ENCODE measurements at regions of chr3 and their contacts with region 1.

Region 1: DNA sequence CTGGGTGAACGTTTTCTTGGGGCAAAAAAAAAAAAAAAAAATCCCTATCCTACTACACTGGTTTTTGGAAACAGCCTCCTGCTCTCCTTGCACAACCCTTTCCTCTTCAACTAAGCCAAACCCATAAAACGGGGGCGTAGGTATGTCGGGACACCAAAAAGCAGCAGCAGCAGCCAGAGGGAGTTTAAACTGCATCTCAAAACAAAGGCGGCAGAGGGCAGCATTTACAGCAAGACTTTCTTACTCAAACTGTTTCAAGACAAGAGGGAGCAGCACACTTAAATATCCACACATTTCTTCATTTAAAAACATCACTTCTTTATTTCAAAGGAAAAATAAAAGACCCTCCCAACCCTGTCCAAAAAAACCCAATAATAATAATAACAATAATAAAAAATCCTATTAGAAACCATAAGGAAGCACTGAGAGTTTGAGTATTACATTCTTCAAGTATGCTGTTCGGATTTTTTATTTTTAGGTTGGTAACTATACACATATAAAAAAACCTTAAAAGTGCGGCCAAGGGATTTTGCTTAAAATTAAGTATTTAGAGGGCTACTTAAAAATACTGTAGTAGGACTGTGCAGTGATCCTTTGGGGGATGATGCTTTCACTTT is 43.9 kb upstream of the PLXND1 start:
- DNase-seq: peak; percentile 88
- H3K4me3 Mint-ChIP-seq: no peak overlapping the region
- H3K27ac Mint-ChIP-seq: no peak overlapping the region
- H3K4me1 Mint-ChIP-seq: peaks cover 21% of the 10 kb centered on the region
- H3K27me3 Mint-ChIP-seq: no peaks in the 10 kb centered on the region
- CTCF ChIP-seq: peak; percentile 75

Region 2: GRCh38 chr3:129809297-129809696 is 158.9 kb after region 1 on chr3:
- CTCF ChIA-PET with region 1: interaction called, 10 read pairs
- POLR2A ChIA-PET with region 1: no interaction called
- intact Hi-C with region 1: no loop called
- DNase-seq: no peak
- H3K4me3 Mint-ChIP-seq: no peak overlapping the region
- H3K27ac Mint-ChIP-seq: no peak overlapping the region
- H3K4me1 Mint-ChIP-seq: peaks cover 5% of the 10 kb centered on the region
- H3K27me3 Mint-ChIP-seq: no peaks in the 10 kb centered on the region
- CTCF ChIP-seq: no peak

Region 3: GRCh38 chr3:129934234-129935123 is 284.1 kb after region 1 on chr3:
- CTCF ChIA-PET with region 1: interaction called, 8 read pairs
- POLR2A ChIA-PET with region 1: no interaction called
- intact Hi-C with region 1: loop called (anchors 1 kb)
- DNase-seq: peak; percentile 51
- H3K4me3 Mint-ChIP-seq: peak overlapping the region; percentile 42
- H3K27ac Mint-ChIP-seq: no peak overlapping the region
- H3K4me1 Mint-ChIP-seq: peaks cover 17% of the 10 kb centered on the region
- H3K27me3 Mint-ChIP-seq: no peaks in the 10 kb centered on the region
- CTCF ChIP-seq: peak; percentile 81

Region 4: DNA sequence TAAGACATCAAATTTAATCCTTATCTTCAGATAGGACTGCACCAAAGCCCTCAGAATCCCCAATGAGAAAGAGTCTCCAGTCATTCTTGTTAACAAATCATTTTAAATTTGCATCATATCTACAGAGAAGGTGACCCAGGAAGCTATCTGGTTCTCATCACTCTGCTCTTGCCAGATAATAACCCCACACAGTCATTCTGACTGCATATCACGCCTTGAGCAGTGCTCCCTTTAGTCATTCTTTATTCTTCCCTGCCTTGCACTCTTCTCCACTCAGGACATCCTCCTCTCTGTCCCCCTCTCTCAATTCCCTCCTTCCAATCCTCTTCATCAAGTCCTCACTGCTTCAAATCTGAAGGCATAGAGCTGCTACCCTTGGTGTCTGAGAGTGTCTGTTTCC is 782.9 kb after region 1 on chr3:
- CTCF ChIA-PET with region 1: no interaction called
- POLR2A ChIA-PET with region 1: no interaction called
- intact Hi-C with region 1: no loop called
- DNase-seq: no peak
- H3K4me3 Mint-ChIP-seq: no peak overlapping the region
- H3K27ac Mint-ChIP-seq: no peak overlapping the region
- H3K4me1 Mint-ChIP-seq: no peaks in the 10 kb centered on the region
- H3K27me3 Mint-ChIP-seq: peaks cover 30% of the 10 kb centered on the region
- CTCF ChIP-seq: no peak

Measured in MCF 10A (cell line).